Activated naive CD4-positive, alpha-beta T cell treated with anti-CD3 and anti-CD28 coated beads for 36 hours (primary cell): ENCODE measurements at regions of chr7 and their contacts with region 1.

Region 1: DNA sequence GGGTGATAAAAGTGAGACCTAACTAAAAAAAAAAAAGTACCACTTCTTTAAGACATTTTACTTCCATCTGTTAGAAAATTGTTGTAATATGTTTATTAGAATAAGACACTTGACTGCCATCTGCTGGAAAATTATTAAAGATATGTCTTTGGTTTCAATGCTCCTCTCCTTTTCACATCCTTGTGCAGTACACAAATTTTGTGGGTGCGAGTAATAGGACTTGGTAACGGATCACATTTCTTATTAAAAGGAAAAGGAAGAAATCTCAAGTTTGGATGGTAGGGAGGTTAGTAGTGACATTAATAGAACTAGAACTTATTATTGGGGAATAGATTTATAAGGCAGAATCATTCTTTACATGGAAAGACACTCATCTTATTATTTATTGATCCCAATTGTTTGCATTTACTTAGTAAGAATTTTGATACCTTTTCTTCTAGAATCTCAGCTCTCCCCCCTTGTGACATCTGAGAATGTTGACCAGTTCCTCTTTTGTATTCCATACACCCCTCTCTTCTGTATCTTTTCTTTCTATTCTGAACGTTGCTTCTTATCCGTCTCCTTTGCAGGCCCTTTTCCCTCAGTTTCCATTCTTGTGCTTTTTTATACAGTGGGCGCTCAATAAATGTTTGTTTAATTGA is 43.1 kb upstream of the RPA3 start:
- DNase-seq: no peak
- H3K4me3 Mint-ChIP-seq: peak overlapping the region; percentile 83
- H3K27ac Mint-ChIP-seq: peak overlapping the region; percentile 76
- H3K4me1 Mint-ChIP-seq: peaks cover 34% of the 10 kb centered on the region
- H3K27me3 Mint-ChIP-seq: no peaks in the 10 kb centered on the region

Region 2: DNA sequence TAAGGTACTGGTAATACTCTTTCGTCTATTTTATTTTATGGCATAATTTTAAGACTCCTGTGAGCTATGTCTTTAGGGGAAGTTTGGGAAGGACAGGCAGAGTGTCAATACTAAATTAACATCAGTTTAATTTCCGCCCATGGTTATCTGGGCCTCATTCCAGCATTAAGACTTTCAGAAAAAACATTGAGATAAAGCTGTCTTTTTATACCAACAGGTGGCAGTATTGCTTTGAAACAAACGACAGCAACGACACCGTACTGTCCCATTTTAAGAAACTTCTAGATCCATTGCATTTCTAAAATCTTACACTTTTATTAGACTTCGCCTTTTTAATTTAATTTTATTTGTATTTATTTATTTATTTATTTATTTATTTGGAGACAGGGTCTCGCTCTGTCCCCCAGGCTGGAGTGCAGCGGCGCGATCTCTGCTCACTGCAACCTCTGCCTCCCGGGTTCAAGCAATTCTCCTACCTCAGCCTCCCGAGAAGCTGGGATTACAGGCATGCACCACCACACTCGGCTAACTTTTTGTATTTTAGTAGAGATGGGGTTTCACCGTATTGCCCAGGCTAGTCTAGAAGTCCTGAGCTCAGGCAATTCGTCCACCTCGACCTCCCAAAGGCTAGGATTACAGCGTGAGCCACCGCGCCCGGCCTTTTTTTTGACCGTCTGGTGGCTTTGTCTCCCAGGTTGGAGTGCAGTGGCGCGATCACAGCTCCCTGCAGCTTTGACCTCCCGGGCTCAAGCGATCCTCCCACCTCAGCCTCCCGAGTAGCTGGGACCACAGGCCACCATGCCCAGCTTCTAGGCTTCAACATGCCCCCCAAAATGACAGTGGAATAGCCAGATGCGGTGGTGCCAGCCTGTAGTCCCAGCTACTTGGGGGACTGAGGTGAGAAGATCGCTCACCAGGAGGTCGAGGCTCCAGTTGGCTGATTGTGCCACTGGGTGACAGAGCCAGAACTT is 657.8 kb before region 1 on chr7:
- CTCF ChIA-PET with region 1: interaction called, 3 read pairs
- intact Hi-C with region 1: loop called (anchors 2 kb)
- DNase-seq: no peak
- H3K4me3 Mint-ChIP-seq: no peak overlapping the region
- H3K27ac Mint-ChIP-seq: no peak overlapping the region
- H3K4me1 Mint-ChIP-seq: peaks cover 24% of the 10 kb centered on the region
- H3K27me3 Mint-ChIP-seq: no peaks in the 10 kb centered on the region

Region 3: DNA sequence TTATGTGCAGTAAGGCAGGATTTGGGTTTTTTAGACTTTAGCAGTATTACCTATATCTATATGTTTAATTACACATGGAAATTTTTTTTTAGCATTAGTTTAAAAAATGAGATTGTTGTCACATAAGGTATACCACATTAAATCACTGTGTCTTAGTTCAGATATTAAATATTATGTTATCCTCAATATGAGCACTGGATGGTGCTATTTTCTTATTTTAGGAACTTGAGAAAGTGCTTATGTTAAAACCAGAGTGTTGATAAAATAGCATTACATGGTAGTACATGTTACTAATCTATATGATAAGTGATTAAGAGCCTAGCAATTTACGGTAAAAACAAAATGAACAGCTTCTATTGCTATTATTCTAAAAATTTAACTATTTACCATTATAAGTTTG is 166.0 kb before region 1 on chr7:
- CTCF ChIA-PET with region 1: interaction called, 8 read pairs
- intact Hi-C with region 1: loop called (anchors 1 kb)
- DNase-seq: no peak
- H3K4me3 Mint-ChIP-seq: no peak overlapping the region
- H3K27ac Mint-ChIP-seq: no peak overlapping the region
- H3K4me1 Mint-ChIP-seq: peaks cover 3% of the 10 kb centered on the region
- H3K27me3 Mint-ChIP-seq: no peaks in the 10 kb centered on the region

Region 4: DNA sequence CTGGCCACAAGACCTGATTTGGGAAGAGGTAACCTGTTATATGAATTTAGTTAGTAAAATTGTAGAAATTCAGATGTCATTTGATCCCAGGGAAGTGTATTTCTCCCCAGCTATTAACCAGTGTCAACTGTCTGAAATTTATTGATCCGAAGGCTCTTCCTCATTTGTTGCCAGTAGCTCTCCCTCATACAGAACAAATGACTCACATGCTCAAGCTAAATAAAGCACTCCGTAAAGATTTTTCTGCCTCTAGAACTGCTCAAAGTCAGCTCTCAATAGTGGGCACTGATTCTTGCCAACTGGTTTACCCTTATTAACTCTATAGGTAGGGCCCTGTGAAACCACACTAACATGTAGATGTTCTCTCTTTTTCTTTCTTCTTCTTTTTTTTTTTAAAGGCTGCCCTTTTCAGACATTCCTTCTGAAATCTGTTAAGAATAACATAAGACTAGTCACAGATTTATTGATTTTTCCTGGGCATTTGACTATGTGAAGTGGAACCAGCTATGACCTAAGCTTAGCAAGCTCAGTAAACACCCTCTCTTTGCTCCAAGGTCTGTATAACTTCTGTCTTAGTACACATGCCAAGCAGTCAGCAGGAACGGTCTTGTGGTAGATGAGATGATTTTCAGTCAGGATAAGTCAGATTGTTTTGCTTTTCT is 64.9 kb before region 1 on chr7:
- CTCF ChIA-PET with region 1: no interaction called
- intact Hi-C with region 1: no loop called
- DNase-seq: no peak
- H3K4me3 Mint-ChIP-seq: no peak overlapping the region
- H3K27ac Mint-ChIP-seq: no peak overlapping the region
- H3K4me1 Mint-ChIP-seq: peaks cover 5% of the 10 kb centered on the region
- H3K27me3 Mint-ChIP-seq: no peaks in the 10 kb centered on the region

Region 5: DNA sequence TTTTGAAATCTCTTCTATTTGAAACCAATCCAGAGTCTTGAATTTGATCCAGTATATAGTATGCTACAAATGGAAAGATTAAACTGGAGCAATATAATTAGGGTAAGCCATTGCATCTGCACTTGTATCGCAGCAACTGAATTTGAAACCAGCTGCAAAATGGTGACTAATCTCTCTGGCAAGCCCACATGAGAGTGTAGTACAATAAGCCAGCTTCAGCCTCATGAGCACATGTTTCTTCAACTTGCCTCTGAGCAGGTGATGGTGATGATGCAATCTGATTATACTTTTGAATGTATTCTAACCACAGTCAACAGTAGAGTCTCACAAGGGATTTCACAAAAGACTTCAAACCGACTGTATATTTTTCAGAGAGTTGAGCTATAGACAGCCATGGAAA is 42.2 kb before region 1 on chr7:
- CTCF ChIA-PET with region 1: interaction called, 4 read pairs
- intact Hi-C with region 1: loop called (anchors 1 kb)
- DNase-seq: peak; percentile 77
- H3K4me3 Mint-ChIP-seq: no peak overlapping the region
- H3K27ac Mint-ChIP-seq: peak overlapping the region; percentile 63
- H3K4me1 Mint-ChIP-seq: peaks cover 19% of the 10 kb centered on the region
- H3K27me3 Mint-ChIP-seq: no peaks in the 10 kb centered on the region

Region 6: GRCh38 chr7:8125680-8126444 is 364.4 kb after region 1 on chr7:
- CTCF ChIA-PET with region 1: interaction called, 3 read pairs
- intact Hi-C with region 1: loop called (anchors 2 kb)
- DNase-seq: peak; percentile 86
- H3K4me3 Mint-ChIP-seq: peak overlapping the region; percentile 71
- H3K27ac Mint-ChIP-seq: peak overlapping the region; percentile 96
- H3K4me1 Mint-ChIP-seq: peaks cover 57% of the 10 kb centered on the region
- H3K27me3 Mint-ChIP-seq: no peaks in the 10 kb centered on the region

Region 7: DNA sequence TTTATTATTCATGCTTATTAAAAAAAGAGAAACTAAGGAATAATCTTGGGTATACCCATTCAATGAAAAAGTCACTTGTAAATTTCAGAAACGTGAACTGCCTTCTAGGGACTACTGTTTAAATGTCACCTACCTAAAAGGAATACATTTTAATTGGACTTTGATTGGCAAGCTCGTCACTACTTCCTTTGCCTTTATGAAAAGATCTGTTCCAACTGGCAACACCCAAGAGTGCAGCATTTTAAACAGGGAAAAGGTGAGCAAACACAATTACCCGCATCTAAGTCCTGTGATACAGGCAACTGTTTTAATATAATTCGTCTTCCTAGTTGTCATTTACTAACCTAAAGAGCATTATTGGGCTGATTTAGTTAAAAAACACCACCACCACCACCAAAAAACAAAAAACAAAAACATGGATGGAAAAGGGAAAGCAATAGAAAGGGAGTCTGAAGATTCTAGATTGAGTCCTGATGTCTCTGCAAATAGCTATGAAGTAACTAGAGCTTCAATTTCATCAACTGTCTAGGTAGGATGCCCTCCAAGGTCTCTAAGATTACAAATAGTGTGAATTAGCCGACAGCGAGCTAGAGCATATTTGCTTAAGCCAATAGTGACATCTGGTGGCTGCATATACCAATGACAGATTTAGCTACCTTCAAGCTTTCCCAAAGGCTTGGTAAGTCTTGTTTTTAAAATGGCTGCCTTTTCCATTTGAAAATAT is 534.3 kb after region 1 on chr7:
- CTCF ChIA-PET with region 1: no interaction called
- intact Hi-C with region 1: loop called (anchors 2 kb)
- DNase-seq: peak; percentile 43
- H3K4me3 Mint-ChIP-seq: no peak overlapping the region
- H3K27ac Mint-ChIP-seq: no peak overlapping the region
- H3K4me1 Mint-ChIP-seq: peaks cover 3% of the 10 kb centered on the region
- H3K27me3 Mint-ChIP-seq: peaks cover 3% of the 10 kb centered on the region